ENCODE measurements at regions of chr16 and their contacts with region 1.

Region 1: DNA sequence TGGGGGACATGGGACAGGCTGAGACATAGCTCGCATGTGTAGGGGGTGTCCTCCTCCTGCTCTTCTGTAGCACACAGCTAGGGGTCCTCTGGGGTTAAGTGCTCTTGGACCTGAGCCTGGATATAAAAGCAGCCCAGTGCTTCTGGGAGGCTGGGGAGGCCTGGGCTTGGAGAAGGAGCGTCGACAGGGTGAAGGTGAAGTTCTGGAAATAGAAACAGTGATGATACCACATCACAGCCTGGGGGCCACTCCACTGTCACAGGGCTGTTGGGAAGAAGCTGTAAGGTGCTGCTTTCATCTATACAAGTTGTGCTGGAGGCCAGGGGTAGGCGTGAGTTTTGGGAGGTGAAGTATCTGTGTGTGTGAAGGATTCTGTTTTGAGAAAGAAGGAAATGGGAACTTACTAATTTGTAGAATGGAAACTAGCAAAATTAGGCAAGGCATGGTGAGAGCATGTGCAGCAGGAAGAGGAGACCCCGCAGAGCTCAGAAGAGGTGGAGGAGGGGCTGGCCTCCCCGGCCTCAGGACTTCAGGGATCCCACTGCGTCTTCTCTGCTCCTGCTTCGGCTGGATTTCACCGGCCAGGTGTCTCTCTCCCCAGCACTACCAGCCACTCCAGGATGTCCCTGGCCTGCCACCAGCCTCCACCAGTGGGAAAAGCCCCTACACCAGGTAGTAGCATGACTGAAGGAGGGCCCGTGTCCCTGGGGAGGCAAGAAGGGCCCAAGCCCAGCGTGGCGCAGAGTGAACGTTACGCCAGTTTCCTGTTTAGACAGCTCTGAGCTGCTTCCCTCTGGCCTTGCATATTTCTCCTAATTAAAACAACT is 19.4 kb downstream of the PLCG2 start:
- DNase-seq: no peak
- H3K4me3 Mint-ChIP-seq: peak overlapping the region; percentile 24
- H3K27ac Mint-ChIP-seq: peak overlapping the region; percentile 77
- H3K4me1 Mint-ChIP-seq: peaks cover 27% of the 10 kb centered on the region
- H3K27me3 Mint-ChIP-seq: no peaks in the 10 kb centered on the region

Region 2: DNA sequence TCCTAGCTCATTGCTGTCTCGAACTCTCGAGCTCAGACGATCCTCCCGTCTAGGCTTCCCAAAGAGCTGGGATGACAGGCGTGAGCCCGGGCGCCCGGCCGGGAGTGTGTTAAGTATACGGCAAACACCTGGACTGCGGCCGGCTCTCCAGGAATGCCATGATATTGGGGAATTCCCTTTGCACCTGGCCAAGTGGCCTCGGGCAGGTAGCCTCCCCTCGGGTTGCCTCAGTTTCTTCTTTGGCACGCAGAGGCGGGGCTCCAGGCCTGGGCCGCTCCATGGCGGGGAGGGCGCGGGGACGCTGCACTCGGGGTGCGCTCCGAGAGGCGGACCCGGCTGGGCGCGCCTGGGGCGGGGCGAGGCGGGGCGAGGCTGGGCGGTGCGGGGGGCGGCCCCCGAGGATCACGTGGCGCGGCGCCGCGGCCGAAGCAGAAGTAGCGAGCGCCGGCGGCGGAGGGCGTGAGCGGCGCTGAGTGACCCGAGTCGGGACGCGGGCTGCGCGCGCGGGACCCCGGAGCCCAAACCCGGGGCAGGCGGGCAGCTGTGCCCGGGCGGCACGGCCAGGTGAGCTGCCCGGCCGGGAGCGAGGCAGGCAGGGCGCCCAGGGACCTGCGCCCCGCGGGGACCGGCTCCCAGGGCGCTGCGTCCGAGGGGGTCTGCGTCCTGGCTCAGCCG is 19.5 kb before region 1 on chr16 and contains the start of gene PLCG2:
- intact Hi-C with region 1: loop called (anchors 2 kb)
- DNase-seq: peak; percentile 74
- H3K4me3 Mint-ChIP-seq: peak within 1 kb of the TSS; percentile 83
- H3K27ac Mint-ChIP-seq: no peak within 1 kb of the TSS
- H3K4me1 Mint-ChIP-seq: peaks cover 13% of the 10 kb centered on the region
- H3K27me3 Mint-ChIP-seq: peaks cover 45% of the 10 kb centered on the region
- total RNA-seq, gene PLCG2: 7.1 and 9.6 TPM in 2 replicates

Region 3: DNA sequence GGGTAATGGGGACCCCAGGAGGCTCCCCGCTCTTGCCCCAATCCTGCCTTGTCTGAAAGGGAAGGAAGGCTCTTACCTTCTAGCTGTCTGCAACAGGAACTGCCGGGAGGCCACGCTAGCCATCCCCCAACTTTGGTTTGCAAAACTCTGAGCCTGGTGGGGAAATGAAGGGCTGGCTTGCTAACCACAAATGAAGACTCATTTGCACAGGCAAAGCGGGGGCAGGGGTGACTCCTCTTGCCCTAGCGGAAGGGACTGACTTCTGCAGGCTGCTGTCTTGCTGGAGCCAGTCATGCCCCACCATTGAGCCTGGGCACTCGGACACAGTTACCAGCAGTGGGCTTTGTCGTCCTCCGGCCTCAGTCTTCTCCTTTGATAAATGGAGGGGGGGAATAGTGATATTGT is 33.2 kb after region 1 on chr16:
- intact Hi-C with region 1: loop called (anchors 5 kb)
- DNase-seq: peak; percentile 23
- H3K4me3 Mint-ChIP-seq: no peak overlapping the region
- H3K27ac Mint-ChIP-seq: no peak overlapping the region
- H3K4me1 Mint-ChIP-seq: peaks cover 14% of the 10 kb centered on the region
- H3K27me3 Mint-ChIP-seq: no peaks in the 10 kb centered on the region

Region 4: GRCh38 chr16:82660075-82660645 is 861.6 kb after region 1 on chr16:
- intact Hi-C with region 1: no loop called
- DNase-seq: no peak
- H3K4me3 Mint-ChIP-seq: no peak overlapping the region
- H3K27ac Mint-ChIP-seq: no peak overlapping the region
- H3K4me1 Mint-ChIP-seq: peaks cover 44% of the 10 kb centered on the region
- H3K27me3 Mint-ChIP-seq: peaks cover 14% of the 10 kb centered on the region